Sigmoid colon (tissue), 7 donors: ENCODE measurements at regions of chr22 and their contacts with region 1.

Region 1: DNA sequence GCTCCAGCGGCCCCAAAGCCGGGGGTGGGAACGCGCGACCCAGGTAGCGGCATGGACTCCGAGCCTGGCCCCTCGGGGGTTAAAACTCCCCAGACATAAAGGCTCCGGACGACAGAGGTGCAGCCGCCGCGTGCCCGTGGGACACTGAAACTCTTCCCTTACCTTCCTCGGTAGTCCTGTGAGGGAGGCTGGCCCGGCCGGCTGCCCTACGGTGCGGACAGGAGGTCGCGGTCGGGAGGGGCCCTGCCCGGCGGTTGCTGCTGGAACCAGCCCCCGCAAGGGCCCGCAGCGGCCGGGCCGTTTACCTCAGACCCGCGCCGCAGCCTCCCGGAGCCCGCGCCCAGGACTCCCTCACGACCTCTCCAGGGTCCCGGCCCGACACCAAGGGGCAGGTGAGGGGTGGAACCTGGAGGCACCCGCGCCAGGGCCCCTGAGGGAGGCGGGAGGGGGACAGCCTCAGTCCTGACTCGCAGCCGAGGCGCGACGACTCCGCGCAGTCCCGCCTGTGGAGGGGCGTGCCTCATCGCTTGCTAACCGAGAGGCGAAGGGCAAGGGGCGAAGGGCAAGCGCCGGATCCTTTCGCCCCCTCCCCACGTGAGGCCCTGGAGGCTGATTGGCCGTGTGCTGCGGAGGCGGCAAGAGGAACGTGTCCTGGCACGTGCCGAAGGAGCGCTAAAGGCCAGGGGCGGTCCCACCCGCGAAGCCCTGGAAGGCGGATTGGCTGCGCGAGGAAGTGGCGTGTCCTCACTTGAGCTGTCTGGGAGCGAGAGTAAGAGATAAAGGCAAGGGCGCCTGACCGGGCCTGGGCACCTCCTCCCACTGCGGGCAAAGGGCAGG is at the start of gene UPB1:
- DNase-seq: no peak
- H3K4me3 ChIP-seq: peak within 1 kb of the TSS in 2 of 4 donors; percentile 26
- H3K27ac ChIP-seq: no peak within 1 kb of the TSS
- H3K4me1 ChIP-seq: peaks cover 0 to 11% (median 10%) of the 10 kb centered on the region in 4 donors
- H3K27me3 ChIP-seq: peaks cover 7 to 29% (median 24%) of the 10 kb centered on the region in 3 donors
- CTCF ChIP-seq: no peak
- EP300 ChIP-seq: no peak
- POLR2A ChIP-seq: no peak
- total RNA-seq, gene UPB1: 0.36 to 0.83 TPM in 2 of 4 donors, not detected in the others

Region 2: GRCh38 chr22:24440718-24441405 is 53.9 kb before region 1 on chr22:
- intact Hi-C with region 1: loop called (anchors 5 kb)
- DNase-seq: no peak
- H3K4me3 ChIP-seq: no peak overlapping the region
- H3K27ac ChIP-seq: no peak overlapping the region
- H3K4me1 ChIP-seq: no peaks in the 10 kb centered on the region
- H3K27me3 ChIP-seq: no peaks in the 10 kb centered on the region
- CTCF ChIP-seq: no peak
- EP300 ChIP-seq: no peak
- POLR2A ChIP-seq: no peak

Region 3: DNA sequence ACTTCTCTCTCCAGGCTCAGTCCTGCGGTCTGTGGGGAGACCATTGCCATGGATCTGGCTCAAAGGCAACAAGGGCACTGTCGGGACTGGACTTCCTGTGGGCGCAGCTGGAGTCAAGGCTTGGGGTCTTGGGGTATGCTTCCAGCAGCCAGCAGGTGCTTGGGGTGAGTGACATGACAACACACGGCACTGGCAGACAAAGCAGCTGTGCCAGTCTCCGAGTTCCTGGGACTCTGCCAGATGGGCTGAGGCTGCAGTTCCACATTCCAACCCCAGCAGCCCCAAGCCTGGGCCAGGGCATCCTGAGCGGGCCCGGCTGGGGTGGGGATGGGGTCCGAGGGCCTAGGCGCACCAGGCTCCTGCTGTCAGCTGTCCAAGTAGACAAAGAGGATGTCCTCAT is 47.9 kb after region 1 on chr22:
- intact Hi-C with region 1: no loop called
- DNase-seq: no peak
- H3K4me3 ChIP-seq: no peak overlapping the region
- H3K27ac ChIP-seq: no peak overlapping the region
- H3K4me1 ChIP-seq: peaks cover 0 to 23% (median 14%) of the 10 kb centered on the region in 4 donors
- H3K27me3 ChIP-seq: no peaks in the 10 kb centered on the region
- CTCF ChIP-seq: no peak
- EP300 ChIP-seq: no peak
- POLR2A ChIP-seq: no peak

Region 4: GRCh38 chr22:25546751-25547150 is 1052.0 kb after region 1 on chr22:
- intact Hi-C with region 1: no loop called
- DNase-seq: no peak
- H3K4me3 ChIP-seq: no peak overlapping the region
- H3K27ac ChIP-seq: no peak overlapping the region
- H3K4me1 ChIP-seq: peaks cover 0 to 28% (median 7%) of the 10 kb centered on the region in 4 donors
- H3K27me3 ChIP-seq: no peaks in the 10 kb centered on the region
- CTCF ChIP-seq: no peak
- EP300 ChIP-seq: no peak
- POLR2A ChIP-seq: no peak